ENCODE measurements at regions of chr20 and their contacts with region 1.

Region 1: GRCh38 chr20:63223221-63224207 is 7.6 kb upstream of the YTHDF1 start:
- H3K4me3 ChIP-seq: no peak overlapping the region
- H3K27ac ChIP-seq: no peak overlapping the region
- H3K4me1 ChIP-seq: peaks cover 4% of the 10 kb centered on the region
- CTCF ChIP-seq: peak; percentile 61; the same call in 1 of the 2 replicates

Region 2: DNA sequence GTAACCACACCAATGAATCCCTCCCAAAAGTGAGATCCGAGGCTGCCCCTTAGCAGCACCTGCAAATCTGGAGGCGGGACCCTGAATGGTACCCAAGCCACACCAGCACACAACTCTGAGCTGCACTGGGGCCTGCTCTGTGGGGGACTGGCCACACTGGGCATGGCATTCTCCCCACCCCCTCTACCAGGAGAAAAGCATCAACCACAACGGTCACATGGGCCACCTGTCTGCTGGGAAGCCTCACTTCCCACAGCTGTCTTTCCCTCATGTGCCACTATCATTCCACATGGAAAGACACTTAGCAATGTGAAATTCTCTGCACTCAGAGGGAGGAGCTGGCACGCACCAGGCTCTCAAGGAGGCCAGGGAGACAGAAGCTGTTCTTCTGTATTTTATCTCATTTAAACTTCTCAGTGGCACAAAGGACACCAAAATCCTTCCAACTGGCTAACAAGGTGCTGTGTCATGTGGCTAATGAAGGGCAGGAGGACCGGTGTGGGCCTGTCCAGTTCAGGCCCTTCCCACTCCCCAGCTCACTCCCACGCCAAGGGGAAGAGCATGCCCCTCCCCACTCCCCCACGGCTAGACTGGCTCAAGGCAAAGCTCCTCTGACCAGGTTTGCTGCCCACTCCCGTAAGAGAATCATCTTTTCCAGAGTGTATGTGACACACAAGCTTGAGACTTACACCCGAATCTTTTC is 26.6 kb before region 1 on chr20:
- CTCF ChIA-PET with region 1: interaction called, 12 read pairs
- POLR2A ChIA-PET with region 1: no interaction called
- H3K4me3 ChIP-seq: no peak overlapping the region
- H3K27ac ChIP-seq: no peak overlapping the region
- H3K4me1 ChIP-seq: no peaks in the 10 kb centered on the region; the same call in 1 of the 2 replicates
- CTCF ChIP-seq: no peak

Region 3: GRCh38 chr20:63234739-63235398 is 11.4 kb after region 1 on chr20:
- CTCF ChIA-PET with region 1: interaction called, 72 read pairs
- POLR2A ChIA-PET with region 1: interaction called, 4 read pairs
- H3K4me3 ChIP-seq: no peak overlapping the region
- H3K27ac ChIP-seq: no peak overlapping the region
- H3K4me1 ChIP-seq: no peaks in the 10 kb centered on the region
- CTCF ChIP-seq: peak; percentile 21; the same call in 1 of the 2 replicates

Region 4: DNA sequence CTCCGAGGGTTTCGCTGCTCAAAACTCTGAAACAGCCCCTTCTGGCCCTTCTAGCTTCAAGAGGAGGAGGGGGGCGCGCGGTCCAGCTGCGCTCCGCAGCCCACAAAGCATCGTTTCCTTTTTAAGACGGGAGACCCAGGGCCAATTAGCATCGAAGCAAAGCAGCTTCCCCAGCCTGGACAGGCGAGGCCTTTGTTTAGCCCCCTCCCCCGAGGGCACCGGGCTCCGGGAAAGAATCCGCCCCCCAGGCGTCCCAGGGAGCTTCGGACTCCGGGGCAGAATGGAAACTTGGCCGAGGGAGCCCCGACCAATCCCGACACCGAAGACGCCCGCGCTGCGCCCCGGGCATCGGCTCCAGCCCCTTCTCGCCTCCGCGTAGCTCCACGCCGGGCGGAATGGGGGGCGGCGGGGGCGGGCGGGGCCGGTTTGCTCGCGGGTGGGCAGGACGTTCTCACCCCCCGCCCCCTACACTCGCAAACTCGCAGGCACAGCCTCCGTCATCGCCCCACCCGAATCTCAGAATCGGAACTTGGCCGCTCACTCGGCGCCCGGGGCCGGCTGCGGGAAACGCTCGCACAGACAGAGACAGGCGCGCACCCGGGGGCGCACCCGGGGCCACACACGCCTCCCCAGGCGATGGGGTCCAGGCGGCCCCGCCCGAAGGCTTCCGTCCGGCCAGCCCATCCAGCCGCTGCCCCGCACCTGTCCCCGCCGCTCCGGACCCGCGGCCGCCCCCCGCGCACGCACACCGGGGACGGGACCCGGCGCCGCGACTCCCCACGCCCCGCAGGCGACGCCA is 30.1 kb after region 1 on chr20:
- CTCF ChIA-PET with region 1: interaction called, 53 read pairs
- POLR2A ChIA-PET with region 1: interaction called, 6 read pairs
- H3K4me3 ChIP-seq: peak overlapping the region; percentile 10
- H3K27ac ChIP-seq: no peak overlapping the region
- H3K4me1 ChIP-seq: no peaks in the 10 kb centered on the region
- CTCF ChIP-seq: no peak

Region 5: DNA sequence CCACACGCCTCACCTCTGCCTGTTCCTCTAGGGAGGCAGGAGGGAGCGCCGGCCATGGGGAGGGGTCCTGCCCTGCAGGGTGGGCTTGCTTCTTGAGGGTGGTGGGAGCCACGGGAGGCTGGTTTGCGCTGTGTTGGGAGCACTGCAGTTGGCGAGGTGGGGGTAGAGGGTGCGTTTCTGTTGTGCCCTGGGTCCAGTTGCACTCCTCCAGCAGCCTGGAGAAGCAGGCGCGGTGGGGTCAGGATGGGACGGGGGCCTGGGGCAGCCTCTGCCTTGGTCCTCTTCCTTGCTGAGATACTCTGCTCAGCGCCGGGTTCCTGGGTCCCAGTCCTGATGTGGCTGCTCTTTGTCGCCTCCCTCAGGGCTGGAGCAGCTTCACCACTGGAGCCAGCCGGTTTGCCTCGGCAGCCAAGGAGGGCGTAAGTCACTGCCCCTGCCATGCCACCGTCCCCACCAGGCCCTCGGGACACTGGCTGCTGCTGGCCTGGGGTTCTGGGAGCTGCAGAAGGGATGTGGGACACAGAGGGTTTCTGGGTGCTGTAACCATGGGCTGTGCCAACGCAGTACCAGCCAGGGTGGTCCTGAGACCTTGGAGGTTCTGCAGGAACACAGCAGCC is 57.5 kb after region 1 on chr20:
- CTCF ChIA-PET with region 1: interaction called, 37 read pairs
- POLR2A ChIA-PET with region 1: interaction called, 3 read pairs
- H3K4me3 ChIP-seq: no peak overlapping the region
- H3K27ac ChIP-seq: no peak overlapping the region
- H3K4me1 ChIP-seq: no peaks in the 10 kb centered on the region
- CTCF ChIP-seq: peak; percentile 29; the same call in 1 of the 2 replicates

Region 6: GRCh38 chr20:63309261-63310071 is 86.0 kb after region 1 on chr20:
- CTCF ChIA-PET with region 1: interaction called, 16 read pairs
- POLR2A ChIA-PET with region 1: no interaction called
- H3K4me3 ChIP-seq: no peak overlapping the region
- H3K27ac ChIP-seq: no peak overlapping the region
- H3K4me1 ChIP-seq: no peaks in the 10 kb centered on the region
- CTCF ChIP-seq: peak; percentile 86

Measured in HEK293 (cell line).